Heart right ventricle (tissue), 16 donors: ENCODE measurements at regions of chr4 and their contacts with region 1.

Region 1: GRCh38 chr4:139501927-139502899 is 48.3 kb downstream of the RAB33B start:
- DNase-seq: no peak
- ATAC-seq: no peak
- H3K4me3 ChIP-seq: no peak overlapping the region
- H3K27ac ChIP-seq: no peak overlapping the region
- H3K4me1 ChIP-seq: peaks cover 0 to 20% (median 4%) of the 10 kb centered on the region in 9 donors
- H3K27me3 ChIP-seq: no peaks in the 10 kb centered on the region
- CTCF ChIP-seq: no peak

Region 2: GRCh38 chr4:139184129-139184528 is 318.1 kb before region 1 on chr4:
- intact Hi-C with region 1: no loop called
- DNase-seq: no peak
- ATAC-seq: peak in 6 of 8 donors; percentile 52 to 61 (median 56)
- H3K4me3 ChIP-seq: no peak overlapping the region
- H3K27ac ChIP-seq: no peak overlapping the region
- H3K4me1 ChIP-seq: peaks cover 0 to 15% (median 0%) of the 10 kb centered on the region in 9 donors
- H3K27me3 ChIP-seq: no peaks in the 10 kb centered on the region
- CTCF ChIP-seq: peak in 6 of 9 donors; percentile 22 to 54 (median 38)

Region 3: DNA sequence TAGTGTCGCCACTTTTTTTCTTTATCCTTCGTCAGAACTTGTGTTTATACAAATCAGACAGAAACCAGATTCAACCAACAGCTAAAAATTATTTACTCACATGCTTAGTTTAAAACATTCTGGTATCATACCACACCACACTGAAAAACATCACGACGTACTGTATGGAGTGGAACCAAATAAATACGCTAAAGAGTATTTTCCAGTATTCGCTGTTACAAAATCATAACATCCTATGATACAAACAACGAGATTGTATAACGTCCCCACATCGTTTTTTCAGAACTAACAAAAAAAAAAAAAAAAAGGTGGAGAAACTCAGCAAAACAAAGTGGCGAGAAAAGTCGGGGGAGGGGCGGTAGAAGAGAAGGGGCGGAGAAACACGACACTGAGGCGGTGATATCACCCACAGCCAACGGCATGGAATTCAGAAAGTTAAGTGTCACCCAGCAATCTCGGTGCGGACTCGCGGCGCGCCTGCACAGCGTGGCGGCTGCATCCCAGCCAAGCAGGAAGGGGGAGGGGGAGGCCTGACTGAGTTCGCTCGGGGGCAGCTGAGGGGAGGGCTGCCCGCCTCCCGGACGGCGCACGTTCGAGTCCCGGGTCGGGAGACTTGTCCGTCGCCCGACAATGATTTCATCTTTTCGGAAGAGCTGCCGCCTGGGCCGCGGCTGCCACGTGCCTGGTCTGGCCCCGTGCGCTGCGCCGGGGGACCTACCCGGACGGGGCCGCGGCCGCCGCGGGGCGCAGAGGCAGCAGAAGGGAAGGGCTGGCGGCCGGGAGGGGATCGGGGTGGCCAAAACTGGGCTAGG is 52.9 kb after region 1 on chr4:
- intact Hi-C with region 1: loop called in 1 of 10 experiments (anchors 5 kb)
- DNase-seq: peak; percentile 91 to 95
- ATAC-seq: peak; percentile 79 to 85 (median 82)
- H3K4me3 ChIP-seq: peak overlapping the region; percentile 65 to 98 (median 92)
- H3K27ac ChIP-seq: peak overlapping the region; percentile 92 to 99 (median 98)
- H3K4me1 ChIP-seq: peaks cover 10 to 77% (median 67%) of the 10 kb centered on the region in 9 donors
- H3K27me3 ChIP-seq: no peaks in the 10 kb centered on the region
- CTCF ChIP-seq: no peak

Region 4: GRCh38 chr4:139645458-139645857 is 143.2 kb after region 1 on chr4:
- intact Hi-C with region 1: loop called in 5 of 10 experiments (anchors 5 to 10 kb)
- DNase-seq: no peak
- ATAC-seq: no peak
- H3K4me3 ChIP-seq: no peak overlapping the region
- H3K27ac ChIP-seq: no peak overlapping the region
- H3K4me1 ChIP-seq: no peaks in the 10 kb centered on the region
- H3K27me3 ChIP-seq: no peaks in the 10 kb centered on the region
- CTCF ChIP-seq: no peak